Activated CD4-positive, alpha-beta T cell treated with anti-CD3 and anti-CD28 coated beads for 36 hours (primary cell): ENCODE measurements at regions of chr11 and their contacts with region 1.

Region 1: GRCh38 chr11:126268708-126269579 is at the starts of genes FOXRED1 and SRPRA:
- DNase-seq: peak; percentile 100
- ATAC-seq: peak; percentile 100
- H3K4me3 Mint-ChIP-seq: peak within 1 kb of the TSS; percentile 86
- H3K27ac Mint-ChIP-seq: peak within 1 kb of the TSS; percentile 95
- H3K4me1 Mint-ChIP-seq: peaks cover 38% of the 10 kb centered on the region
- H3K27me3 Mint-ChIP-seq: no peaks in the 10 kb centered on the region
- total RNA-seq, gene FOXRED1: 39.0 to 43.7 TPM
- total RNA-seq, gene SRPRA: 131 to 139 TPM

Region 2: GRCh38 chr11:125568970-125569914 is 699.7 kb before region 1 on chr11 and contains the start of gene EI24:
- CTCF ChIA-PET with region 1: no interaction called
- POLR2A ChIA-PET with region 1: no interaction called
- intact Hi-C with region 1: loop called in 1 of 2 experiments (anchors 1 kb)
- DNase-seq: peak; percentile 95
- ATAC-seq: peak; percentile 95
- H3K4me3 Mint-ChIP-seq: peak within 1 kb of the TSS; percentile 92
- H3K27ac Mint-ChIP-seq: peak within 1 kb of the TSS; percentile 93
- H3K4me1 Mint-ChIP-seq: peaks cover 24% of the 10 kb centered on the region
- H3K27me3 Mint-ChIP-seq: no peaks in the 10 kb centered on the region
- total RNA-seq, gene EI24: 36.3 to 36.6 TPM

Region 3: DNA sequence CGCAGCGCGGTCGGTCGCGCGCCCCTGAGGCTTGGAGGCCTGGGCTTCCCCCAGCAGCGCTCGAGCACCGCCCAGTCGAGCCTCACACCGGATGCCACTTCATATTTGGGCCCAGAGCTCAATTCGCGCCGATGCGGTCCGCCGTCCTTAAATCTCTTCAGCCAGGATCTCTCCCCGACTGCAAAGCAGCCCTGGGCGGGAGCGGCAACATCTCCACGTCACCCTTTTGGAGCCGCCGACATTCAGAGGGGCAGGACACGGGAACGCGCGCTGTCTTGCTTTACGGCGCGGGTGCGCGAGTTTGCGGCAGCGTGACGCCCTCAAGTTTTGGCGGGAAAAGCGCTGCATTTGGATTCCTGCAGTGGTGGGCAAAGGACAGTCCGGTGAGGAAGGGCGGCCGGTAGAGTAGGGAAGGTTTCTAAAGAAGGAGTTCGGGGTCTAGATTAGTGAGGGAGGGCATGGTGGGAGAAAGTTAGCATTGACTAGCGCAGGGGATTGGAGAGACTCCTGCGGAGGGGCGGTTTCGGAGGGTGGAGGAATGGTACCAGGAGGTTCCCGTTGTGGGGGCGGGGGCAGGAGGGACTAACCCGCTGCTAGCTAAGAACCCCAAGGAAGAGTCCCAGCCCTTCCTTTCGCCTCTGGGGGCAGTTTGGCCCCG is 643.2 kb before region 1 on chr11:
- CTCF ChIA-PET with region 1: no interaction called
- POLR2A ChIA-PET with region 1: no interaction called
- intact Hi-C with region 1: loop called in 1 of 2 experiments (anchors 10 kb)
- DNase-seq: peak; percentile 92
- ATAC-seq: peak; percentile 88
- H3K4me3 Mint-ChIP-seq: peak overlapping the region; percentile 88
- H3K27ac Mint-ChIP-seq: peak overlapping the region; percentile 98
- H3K4me1 Mint-ChIP-seq: peaks cover 17% of the 10 kb centered on the region
- H3K27me3 Mint-ChIP-seq: no peaks in the 10 kb centered on the region

Region 4: DNA sequence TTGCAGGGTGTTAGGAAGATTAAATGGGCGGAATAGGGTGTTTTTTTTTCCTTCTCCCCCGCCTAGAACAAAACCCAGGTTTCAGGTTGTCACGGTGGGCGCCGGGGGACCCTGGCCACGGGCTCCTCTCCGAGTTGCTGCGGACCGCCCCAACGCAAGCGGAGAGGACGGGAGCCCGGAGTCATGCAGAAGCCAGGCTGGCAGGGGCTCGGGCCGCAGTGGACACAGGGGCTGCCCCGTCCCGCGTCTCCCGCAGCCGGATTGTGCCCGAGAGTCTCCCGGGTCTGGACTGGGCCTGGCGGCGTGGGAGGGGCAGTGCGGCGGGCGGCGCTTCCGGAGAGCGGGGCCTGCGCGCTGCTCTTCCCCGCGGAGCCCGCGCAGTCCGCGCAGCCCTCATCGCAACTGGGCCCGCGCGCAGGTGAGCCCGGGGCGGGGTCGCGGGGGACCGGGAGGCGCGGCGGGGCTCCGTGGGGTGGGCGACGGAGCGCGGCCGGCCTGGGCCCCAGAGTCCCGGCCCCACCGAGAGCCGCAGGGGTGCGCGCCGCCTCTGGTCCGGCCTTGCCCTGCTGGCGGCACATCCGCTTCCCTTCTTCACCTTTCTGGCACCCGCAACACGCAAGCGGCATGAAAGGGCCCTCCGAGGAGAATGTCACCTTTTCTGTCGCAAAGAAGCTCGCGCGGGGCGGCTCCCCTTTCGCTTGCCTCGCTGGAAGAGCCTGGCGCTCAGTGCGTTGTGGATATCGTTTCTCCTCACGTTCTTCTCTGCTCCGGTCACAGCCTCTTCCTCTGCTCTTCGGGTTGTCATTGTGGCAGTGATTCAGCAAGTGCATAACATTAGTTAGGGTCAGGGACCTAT is 14.0 kb after region 1 on chr11 and contains the start of gene TIRAP:
- CTCF ChIA-PET with region 1: interaction called, 11 read pairs
- POLR2A ChIA-PET with region 1: no interaction called
- intact Hi-C with region 1: loop called (anchors 1 kb)
- DNase-seq: peak; percentile 76
- ATAC-seq: peak; percentile 53
- H3K4me3 Mint-ChIP-seq: peak within 1 kb of the TSS; percentile 81
- H3K27ac Mint-ChIP-seq: peak within 1 kb of the TSS; percentile 94
- H3K4me1 Mint-ChIP-seq: peaks cover 46% of the 10 kb centered on the region
- H3K27me3 Mint-ChIP-seq: no peaks in the 10 kb centered on the region
- total RNA-seq, gene TIRAP: 5.3 to 7.5 TPM

Region 5: GRCh38 chr11:126355324-126355925 is 86.5 kb after region 1 on chr11 and contains the start of gene ST3GAL4:
- CTCF ChIA-PET with region 1: no interaction called
- POLR2A ChIA-PET with region 1: interaction called, 5 read pairs
- intact Hi-C with region 1: loop called in 1 of 2 experiments (anchors 1 kb)
- DNase-seq: peak; percentile 86
- ATAC-seq: peak; percentile 77
- H3K4me3 Mint-ChIP-seq: peak within 1 kb of the TSS; percentile 93
- H3K27ac Mint-ChIP-seq: peak within 1 kb of the TSS; percentile 88
- H3K4me1 Mint-ChIP-seq: peaks cover 29% of the 10 kb centered on the region
- H3K27me3 Mint-ChIP-seq: no peaks in the 10 kb centered on the region
- total RNA-seq, gene ST3GAL4: 7.5 to 9.1 TPM